Upper lobe of right lung (tissue), 1 donor: ENCODE measurements at regions of chr22 and their contacts with region 1.

Region 1: DNA sequence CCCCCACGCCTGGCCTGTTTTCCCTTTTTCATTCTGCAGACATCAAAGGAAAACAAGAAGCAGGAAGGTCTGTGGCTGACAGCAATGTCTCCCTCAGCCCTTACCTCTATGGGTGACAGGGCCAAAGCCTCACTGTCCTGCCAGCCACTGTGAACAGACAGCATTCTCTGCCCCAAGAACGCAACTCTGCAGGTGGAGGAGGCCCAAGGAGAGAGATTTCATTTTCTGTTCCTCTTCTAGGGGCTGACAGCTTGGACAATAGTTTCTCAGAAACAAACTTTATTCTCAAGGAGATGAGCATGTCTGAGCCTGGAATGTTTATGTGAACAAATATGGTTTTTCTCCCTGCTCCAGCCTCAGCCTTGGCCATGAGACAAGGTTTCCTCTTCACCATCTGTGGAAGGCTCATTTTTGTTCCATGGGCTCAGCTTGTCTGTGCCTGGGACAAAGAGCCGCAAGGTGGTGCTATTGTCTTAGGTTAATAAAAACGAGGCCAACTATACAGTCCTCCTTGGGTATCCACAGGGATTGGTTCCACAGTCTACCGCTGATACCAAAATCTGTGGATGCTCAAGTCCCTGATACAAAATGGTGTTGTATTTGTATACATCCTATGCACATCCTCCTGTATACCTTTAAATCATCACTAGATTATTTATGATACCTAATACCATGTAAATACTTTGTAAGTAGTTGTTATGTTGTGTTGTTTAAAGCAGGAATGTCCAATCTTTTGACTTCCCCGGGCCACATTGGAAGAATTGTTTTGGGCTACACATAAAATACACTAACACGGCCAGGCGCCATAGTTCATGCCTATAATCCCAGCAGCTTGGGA is 5.8 kb downstream of the PIWIL3 start:
- DNase-seq: no peak
- ATAC-seq: peak; percentile 89
- H3K4me3 ChIP-seq: no peak overlapping the region
- H3K27ac ChIP-seq: no peak overlapping the region
- H3K4me1 ChIP-seq: no peaks in the 10 kb centered on the region
- H3K27me3 ChIP-seq: peaks cover 11% of the 10 kb centered on the region
- CTCF ChIP-seq: peak; percentile 72

Region 2: GRCh38 chr22:24845041-24845898 is 76.5 kb after region 1 on chr22:
- intact Hi-C with region 1: loop called (anchors 5 kb)
- DNase-seq: no peak
- ATAC-seq: peak; percentile 31
- H3K4me3 ChIP-seq: no peak overlapping the region
- H3K27ac ChIP-seq: no peak overlapping the region
- H3K4me1 ChIP-seq: no peaks in the 10 kb centered on the region
- H3K27me3 ChIP-seq: no peaks in the 10 kb centered on the region
- CTCF ChIP-seq: no peak